Aorta (tissue), 5 donors: ENCODE measurements at regions of chr16 and their contacts with region 1.

Region 1: DNA sequence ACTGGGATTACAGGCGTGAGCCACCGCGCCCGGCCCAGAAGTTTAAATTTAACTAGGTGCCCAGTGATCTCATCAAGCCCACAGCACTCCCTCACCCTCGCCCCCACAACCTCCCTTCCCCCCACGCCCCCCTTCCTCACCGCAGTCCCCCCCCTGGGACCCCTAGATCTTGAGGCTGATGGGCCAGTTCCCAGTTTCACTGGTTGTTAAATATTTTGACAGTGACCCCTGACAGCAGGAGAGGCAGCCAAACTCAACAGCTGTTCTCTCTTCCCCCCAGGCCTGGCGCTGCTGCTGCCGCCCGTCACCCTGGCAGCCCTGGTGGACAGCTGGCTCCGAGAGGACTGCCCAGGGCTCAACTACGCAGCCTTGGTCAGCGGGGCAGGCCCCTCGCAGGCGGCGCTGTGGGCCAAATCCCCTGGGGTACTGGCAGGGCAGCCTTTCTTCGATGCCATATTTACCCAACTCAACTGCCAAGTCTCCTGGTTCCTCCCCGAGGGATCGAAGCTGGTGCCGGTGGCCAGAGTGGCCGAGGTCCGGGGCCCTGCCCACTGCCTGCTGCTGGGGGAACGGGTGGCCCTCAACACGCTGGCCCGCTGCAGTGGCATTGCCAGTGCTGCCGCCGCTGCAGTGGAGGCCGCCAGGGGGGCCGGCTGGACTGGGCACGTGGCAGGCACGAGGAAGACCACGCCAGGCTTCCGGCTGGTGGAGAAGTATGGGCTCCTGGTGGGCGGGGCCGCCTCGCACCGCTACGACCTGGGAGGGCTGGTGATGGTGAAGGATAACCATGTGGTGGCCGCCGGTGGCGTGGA is 15.6 kb downstream of the QPRT start:
- DNase-seq: peak; percentile 82 to 89
- ATAC-seq: peak; percentile 85
- H3K4me3 ChIP-seq: no peak overlapping the region
- H3K27ac ChIP-seq: peak overlapping the region in 1 of 2 donors; percentile 14
- H3K4me1 ChIP-seq: no peaks in the 10 kb centered on the region
- H3K27me3 ChIP-seq: no peaks in the 10 kb centered on the region

Region 2: DNA sequence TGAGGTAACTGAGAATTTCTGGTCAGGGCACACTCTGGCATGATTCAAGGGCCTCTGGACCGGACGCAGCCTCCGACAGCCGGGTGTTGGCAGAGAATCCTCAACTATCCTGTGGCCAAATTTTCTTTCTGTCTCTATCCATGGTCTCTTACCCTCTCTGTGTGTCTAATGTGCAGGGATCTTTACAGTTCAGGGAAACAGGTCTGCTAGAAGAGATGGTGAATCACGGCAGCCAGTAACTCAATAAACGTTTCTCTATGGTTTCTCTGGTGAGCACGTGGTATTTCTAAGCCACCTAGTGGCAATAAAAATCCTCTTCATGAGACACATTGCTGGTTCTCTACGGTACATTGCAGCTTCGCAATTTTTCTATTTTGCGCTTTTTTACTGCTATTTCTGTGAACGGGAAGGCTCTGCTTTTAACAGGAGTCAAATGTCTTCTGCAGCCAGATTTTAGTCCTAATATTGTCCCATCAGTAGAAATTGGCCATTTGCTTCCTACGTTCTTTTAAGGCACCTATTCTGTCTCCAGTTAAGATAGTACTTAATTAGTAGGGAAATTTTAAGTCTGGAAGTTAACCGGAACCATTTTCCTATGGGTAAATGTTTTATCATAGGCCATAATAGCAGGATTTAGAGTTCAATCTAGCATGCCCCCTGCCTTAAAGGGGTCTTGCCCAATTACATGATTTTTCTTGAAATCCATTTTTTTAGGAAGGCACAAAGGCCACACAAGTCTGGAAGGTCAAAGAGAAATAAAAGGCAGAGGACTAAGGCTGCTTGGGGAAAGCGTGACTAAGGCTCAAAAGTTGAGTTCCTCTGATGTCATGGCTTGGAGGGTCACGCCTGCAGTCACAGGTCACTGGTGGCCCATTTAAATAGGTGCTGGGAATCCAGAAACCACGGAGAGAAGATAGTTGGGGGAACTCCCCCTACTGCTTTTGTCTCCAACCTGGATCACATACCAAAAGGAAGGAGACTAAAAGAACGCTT is 15.9 kb after region 1 on chr16:
- intact Hi-C with region 1: no loop called
- DNase-seq: peak in 1 of 2 donors; percentile 32
- ATAC-seq: peak; percentile 65
- H3K4me3 ChIP-seq: no peak overlapping the region
- H3K27ac ChIP-seq: peak overlapping the region in 1 of 2 donors; percentile 18
- H3K4me1 ChIP-seq: no peaks in the 10 kb centered on the region
- H3K27me3 ChIP-seq: no peaks in the 10 kb centered on the region

Region 3: DNA sequence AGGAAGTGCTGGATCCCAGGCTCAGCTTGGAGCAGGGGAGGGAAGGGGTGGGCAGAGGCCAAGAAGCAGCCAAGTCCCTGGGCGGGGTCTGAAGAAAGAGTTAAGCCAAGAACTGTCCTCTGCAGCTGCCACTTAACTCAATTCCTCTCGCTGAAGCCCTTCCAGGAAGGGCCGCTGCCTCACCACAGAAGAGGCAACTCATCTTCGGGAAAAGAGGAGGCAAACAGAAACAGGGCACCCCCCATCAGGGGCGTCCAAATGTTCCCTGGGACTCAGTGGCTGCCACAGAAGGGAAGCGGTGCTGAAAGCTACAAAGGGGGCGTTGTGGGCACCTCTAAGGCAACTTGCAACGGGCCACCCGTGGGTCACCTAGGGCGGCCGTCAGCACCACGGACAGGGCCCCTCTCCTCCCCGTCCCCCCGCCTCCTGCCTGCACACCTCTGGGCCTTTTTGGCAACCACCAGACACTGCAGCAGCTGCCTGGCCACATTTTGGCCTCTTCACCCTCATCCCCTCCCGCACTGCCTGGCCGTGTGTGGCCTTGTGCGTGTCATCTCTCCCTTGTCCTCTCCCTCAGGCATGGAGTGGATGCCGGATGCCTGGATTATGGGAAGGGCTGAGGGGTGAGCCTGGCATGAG is 334.0 kb after region 1 on chr16:
- intact Hi-C with region 1: loop called in 1 of 2 experiments (anchors 10 kb)
- DNase-seq: no peak
- ATAC-seq: no peak
- H3K4me3 ChIP-seq: no peak overlapping the region
- H3K27ac ChIP-seq: no peak overlapping the region
- H3K4me1 ChIP-seq: no peaks in the 10 kb centered on the region
- H3K27me3 ChIP-seq: no peaks in the 10 kb centered on the region